ENCODE measurements at regions of chr2 and their contacts with region 1.

Region 1: GRCh38 chr2:42828487-42829425 is 36.4 kb upstream of the HAAO start:
- DNase-seq: peak; percentile 15
- ATAC-seq: peak; percentile 97
- H3K4me3 ChIP-seq: no peak overlapping the region
- H3K27ac ChIP-seq: no peak overlapping the region
- H3K4me1 ChIP-seq: no peaks in the 10 kb centered on the region
- H3K27me3 ChIP-seq: no peaks in the 10 kb centered on the region; a peak in 1 of 4 replicates
- CTCF ChIP-seq: peak; percentile 92 to 98 (median 93)
- EP300 ChIP-seq: no peak
- POLR2A ChIP-seq: no peak
- RAD21 ChIP-seq: peak; percentile 82

Region 2: GRCh38 chr2:42810121-42810970 is 18.4 kb before region 1 on chr2:
- CTCF ChIA-PET with region 1: interaction called, 12 read pairs
- POLR2A ChIA-PET with region 1: no interaction called
- RAD21 ChIA-PET with region 1: interaction called, 3 read pairs
- SMC1A ChIA-PET with region 1: interaction called, 4 read pairs
- in situ Hi-C with region 1: no loop called
- intact Hi-C with region 1: no loop called
- DNase-seq: peak; percentile 95
- ATAC-seq: peak; percentile 84
- H3K4me3 ChIP-seq: peak overlapping the region; percentile 68
- H3K27ac ChIP-seq: peak overlapping the region; percentile 97
- H3K4me1 ChIP-seq: peaks cover 9% of the 10 kb centered on the region
- H3K27me3 ChIP-seq: no peaks in the 10 kb centered on the region
- CTCF ChIP-seq: 0 out of 6 replicates have a peak, but pooled peaks of 1 of the 3 experiments have one; percentile 3
- EP300 ChIP-seq: peak; percentile 18 to 88; a peak in 1 of 4 replicates
- POLR2A ChIP-seq: peak; percentile 90
- RAD21 ChIP-seq: no peak

Region 3: DNA sequence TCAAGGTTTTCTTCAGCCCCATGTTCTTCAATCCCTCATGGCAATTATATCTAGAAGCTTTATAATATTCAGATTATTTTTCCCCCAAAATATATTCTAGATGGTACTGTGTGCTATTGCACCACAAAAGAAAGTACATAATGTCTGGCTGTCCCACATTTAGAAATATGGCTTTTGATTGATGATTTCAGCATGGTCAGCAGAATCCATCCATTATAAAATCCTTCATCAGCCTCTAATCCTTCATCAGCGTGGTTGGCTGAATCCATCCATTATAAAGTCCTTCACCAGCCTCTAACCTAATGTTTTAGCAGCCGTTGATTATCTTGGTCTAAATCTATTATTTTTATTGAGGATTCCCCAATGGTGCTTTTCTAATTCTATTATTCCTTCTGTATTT is 13.0 kb before region 1 on chr2:
- CTCF ChIA-PET with region 1: interaction called, 12 read pairs
- POLR2A ChIA-PET with region 1: no interaction called
- RAD21 ChIA-PET with region 1: interaction called, 4 read pairs
- SMC1A ChIA-PET with region 1: interaction called, 4 read pairs
- in situ Hi-C with region 1: no loop called
- intact Hi-C with region 1: no loop called
- DNase-seq: no peak
- ATAC-seq: no peak
- H3K4me3 ChIP-seq: no peak overlapping the region
- H3K27ac ChIP-seq: no peak overlapping the region
- H3K4me1 ChIP-seq: peaks cover 5% of the 10 kb centered on the region
- H3K27me3 ChIP-seq: no peaks in the 10 kb centered on the region
- CTCF ChIP-seq: no peak
- EP300 ChIP-seq: no peak
- POLR2A ChIP-seq: no peak
- RAD21 ChIP-seq: no peak

Region 4: DNA sequence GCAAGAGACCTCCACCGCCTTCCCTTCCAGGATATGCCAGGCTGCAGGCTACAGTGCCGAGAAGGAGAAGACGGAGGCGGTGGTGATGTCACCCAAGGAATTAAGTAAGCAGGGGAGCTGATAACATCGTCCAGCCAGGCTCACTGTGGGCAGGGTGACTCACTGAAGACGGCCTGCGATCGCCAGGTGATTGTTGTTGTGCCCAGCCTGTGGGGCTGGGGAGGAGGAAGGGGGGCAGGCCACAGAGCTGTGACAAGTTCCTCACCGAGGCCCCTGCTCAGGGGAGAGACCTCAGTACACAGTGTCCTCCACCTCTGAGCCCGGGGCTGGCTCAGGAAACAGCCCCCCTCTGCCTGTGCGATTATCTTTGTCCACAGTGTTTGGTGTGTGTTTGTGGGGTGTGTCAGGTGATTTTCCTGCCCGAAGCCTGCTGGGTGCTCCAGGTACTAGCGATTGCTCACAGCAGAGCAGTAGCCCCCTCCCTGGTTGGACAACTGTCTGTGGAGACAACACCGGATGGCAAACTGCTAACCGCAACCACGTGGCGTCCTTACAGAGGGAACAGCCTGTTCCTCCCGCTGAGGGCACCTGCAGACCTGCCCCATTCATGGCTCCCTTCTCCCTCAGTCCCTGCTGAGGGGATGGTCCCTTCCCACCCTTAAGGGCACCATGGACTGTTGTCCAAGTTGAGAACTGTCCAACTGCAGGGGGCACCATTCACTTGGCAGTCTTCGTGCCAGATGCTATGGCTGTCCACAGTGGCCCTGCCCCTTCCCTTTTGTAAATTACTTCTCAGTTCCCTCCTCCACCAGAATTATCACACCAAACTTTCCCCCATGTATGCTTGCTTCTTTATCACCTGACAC is 302.5 kb after region 1 on chr2:
- CTCF ChIA-PET with region 1: interaction called, 3 read pairs
- POLR2A ChIA-PET with region 1: no interaction called
- RAD21 ChIA-PET with region 1: no interaction called
- SMC1A ChIA-PET with region 1: interaction called, 3 read pairs
- in situ Hi-C with region 1: no loop called
- intact Hi-C with region 1: loop called (anchors 5 kb)
- DNase-seq: no peak
- ATAC-seq: peak; percentile 81
- H3K4me3 ChIP-seq: no peak overlapping the region
- H3K27ac ChIP-seq: no peak overlapping the region
- H3K4me1 ChIP-seq: peaks cover 43% of the 10 kb centered on the region
- H3K27me3 ChIP-seq: no peaks in the 10 kb centered on the region
- CTCF ChIP-seq: peak; percentile 61 to 82 (median 62); a peak in 5 of 6 replicates
- EP300 ChIP-seq: no peak; a peak in 1 of 4 replicates
- POLR2A ChIP-seq: no peak
- RAD21 ChIP-seq: peak; percentile 78

Region 5: DNA sequence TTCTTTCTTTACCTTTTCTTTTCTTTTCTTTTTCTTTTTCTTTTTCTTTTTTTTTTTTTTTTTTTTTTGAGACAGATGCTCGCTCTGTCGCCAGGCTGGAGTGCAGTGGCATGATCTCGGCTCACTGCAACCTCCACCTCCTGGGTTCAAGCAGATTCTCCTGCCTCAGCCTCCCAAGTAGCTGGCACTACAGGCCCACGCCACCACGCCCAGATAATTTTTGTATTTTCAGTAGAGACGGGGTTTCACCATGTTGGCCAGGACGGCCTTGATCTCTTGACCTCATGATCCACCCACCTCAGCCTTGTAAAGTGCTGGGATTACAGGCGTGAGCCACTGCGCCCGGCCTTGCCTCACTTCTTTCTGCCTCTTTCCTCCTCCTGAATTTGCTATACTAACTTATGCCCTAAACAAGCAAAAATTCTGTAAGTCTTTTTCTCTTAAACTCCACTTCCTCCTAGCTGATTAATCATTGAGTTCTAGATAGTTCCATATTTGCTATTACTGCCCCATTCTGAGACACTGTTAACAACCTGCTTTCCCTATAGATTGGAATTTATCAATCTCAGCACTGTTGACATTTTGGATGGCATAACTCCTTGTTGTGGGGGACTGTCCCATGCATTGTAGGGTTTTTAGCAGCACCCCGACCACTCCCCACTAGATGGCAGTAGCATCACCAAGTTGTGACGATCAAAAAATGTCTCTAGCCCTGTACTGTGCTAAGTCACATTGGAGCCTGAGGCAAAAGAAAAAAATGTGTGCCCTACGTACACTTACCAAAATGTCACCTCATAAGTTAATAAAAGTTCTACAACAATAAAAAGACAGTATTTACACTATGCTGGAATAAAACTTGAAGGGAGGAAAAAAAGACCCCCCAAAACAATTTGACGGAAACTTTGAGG is 783.5 kb after region 1 on chr2:
- CTCF ChIA-PET with region 1: interaction called, 5 read pairs
- POLR2A ChIA-PET with region 1: no interaction called
- RAD21 ChIA-PET with region 1: no interaction called
- SMC1A ChIA-PET with region 1: interaction called, 4 read pairs
- in situ Hi-C with region 1: loop called (anchors 5 kb)
- intact Hi-C with region 1: loop called (anchors 1 kb)
- DNase-seq: peak; percentile 17
- ATAC-seq: peak; percentile 97
- H3K4me3 ChIP-seq: no peak overlapping the region
- H3K27ac ChIP-seq: no peak overlapping the region
- H3K4me1 ChIP-seq: no peaks in the 10 kb centered on the region
- H3K27me3 ChIP-seq: no peaks in the 10 kb centered on the region; a peak in 1 of 4 replicates
- CTCF ChIP-seq: peak; percentile 78 to 85 (median 84)
- EP300 ChIP-seq: no peak
- POLR2A ChIP-seq: no peak
- RAD21 ChIP-seq: peak; percentile 64